ENCODE measurements at regions of chr9 and their contacts with region 1.

Region 1: DNA sequence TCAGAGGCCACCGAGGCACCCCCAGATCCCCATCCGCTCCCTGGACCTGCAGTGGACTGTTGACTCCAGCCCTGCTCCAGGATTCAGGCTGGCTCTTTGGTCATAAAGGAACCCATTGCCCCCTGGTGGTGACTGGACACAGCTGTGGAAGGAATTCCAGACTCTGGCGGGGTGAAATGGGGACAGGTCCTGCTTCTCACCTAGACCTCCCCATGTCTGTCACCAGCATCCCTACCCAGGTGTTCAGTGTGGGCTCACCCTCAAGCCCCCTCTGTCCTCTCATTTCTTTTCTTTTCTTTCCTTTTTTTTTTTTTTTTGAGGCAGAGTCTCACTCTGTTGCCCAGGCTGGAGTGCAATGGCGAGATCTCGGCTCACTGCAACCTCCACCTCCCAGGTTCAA is 25.5 kb upstream of the STXBP1 start:
- DNase-seq: peak; percentile 76
- ATAC-seq: peak; percentile 85
- H3K4me3 ChIP-seq: no peak overlapping the region
- H3K27ac ChIP-seq: no peak overlapping the region
- H3K4me1 ChIP-seq: peaks cover 4% of the 10 kb centered on the region
- H3K27me3 ChIP-seq: no peaks in the 10 kb centered on the region
- CTCF ChIP-seq: peak; percentile 94
- POLR2A ChIP-seq: no peak
- RAD21 ChIP-seq: peak; percentile 94

Region 2: GRCh38 chr9:127450830-127451724 is 135.5 kb before region 1 on chr9 and contains the starts of genes LRSAM1 and RPL12:
- CTCF ChIA-PET with region 1: no interaction called
- POLR2A ChIA-PET with region 1: no interaction called
- dilution Hi-C with region 1: no loop called
- in situ Hi-C with region 1: no loop called
- intact Hi-C with region 1: loop called (anchors 5 kb)
- DNase-seq: peak; percentile 94
- ATAC-seq: peak; percentile 60
- H3K4me3 ChIP-seq: peak within 1 kb of the TSS; percentile 83
- H3K27ac ChIP-seq: peak within 1 kb of the TSS; percentile 91
- H3K4me1 ChIP-seq: peaks cover 13% of the 10 kb centered on the region
- H3K27me3 ChIP-seq: no peaks in the 10 kb centered on the region
- CTCF ChIP-seq: no peak
- POLR2A ChIP-seq: peak; percentile 100
- RAD21 ChIP-seq: no peak
- total RNA-seq, gene LRSAM1: 3.0 and 3.3 TPM in 2 replicates
- total RNA-seq, gene RPL12: 1,864 and 2,290 TPM in 2 replicates

Region 3: GRCh38 chr9:127525401-127526187 is 60.9 kb before region 1 on chr9:
- CTCF ChIA-PET with region 1: interaction called, 11 read pairs
- POLR2A ChIA-PET with region 1: interaction called, 3 read pairs
- dilution Hi-C with region 1: no loop called
- in situ Hi-C with region 1: no loop called
- intact Hi-C with region 1: loop called (anchors 1 kb)
- DNase-seq: peak; percentile 58
- ATAC-seq: peak; percentile 7; the same call in 1 of the 2 replicates
- H3K4me3 ChIP-seq: no peak overlapping the region
- H3K27ac ChIP-seq: peak overlapping the region; percentile 84; the same call in 1 of the 2 replicates
- H3K4me1 ChIP-seq: peaks cover 38% of the 10 kb centered on the region
- H3K27me3 ChIP-seq: no peaks in the 10 kb centered on the region
- CTCF ChIP-seq: peak; percentile 66
- POLR2A ChIP-seq: no peak
- RAD21 ChIP-seq: peak; percentile 69

Region 4: GRCh38 chr9:127715394-127716337 is 129.1 kb after region 1 on chr9 and contains the starts of genes PTRH1 and TTC16:
- CTCF ChIA-PET with region 1: no interaction called
- POLR2A ChIA-PET with region 1: no interaction called
- dilution Hi-C with region 1: no loop called
- in situ Hi-C with region 1: no loop called
- intact Hi-C with region 1: loop called (anchors 1 kb)
- DNase-seq: peak; percentile 93
- ATAC-seq: peak; percentile 98
- H3K4me3 ChIP-seq: peak within 1 kb of the TSS; percentile 80
- H3K27ac ChIP-seq: peak within 1 kb of the TSS; percentile 46
- H3K4me1 ChIP-seq: peaks cover 7% of the 10 kb centered on the region
- H3K27me3 ChIP-seq: no peaks in the 10 kb centered on the region
- CTCF ChIP-seq: no peak
- POLR2A ChIP-seq: peak; percentile 43; the same call in 1 of the 2 replicates
- RAD21 ChIP-seq: no peak
- total RNA-seq, gene PTRH1: 5.4 and 8.3 TPM in 2 replicates
- total RNA-seq, gene TTC16: not detected in 2 replicates

Region 5: DNA sequence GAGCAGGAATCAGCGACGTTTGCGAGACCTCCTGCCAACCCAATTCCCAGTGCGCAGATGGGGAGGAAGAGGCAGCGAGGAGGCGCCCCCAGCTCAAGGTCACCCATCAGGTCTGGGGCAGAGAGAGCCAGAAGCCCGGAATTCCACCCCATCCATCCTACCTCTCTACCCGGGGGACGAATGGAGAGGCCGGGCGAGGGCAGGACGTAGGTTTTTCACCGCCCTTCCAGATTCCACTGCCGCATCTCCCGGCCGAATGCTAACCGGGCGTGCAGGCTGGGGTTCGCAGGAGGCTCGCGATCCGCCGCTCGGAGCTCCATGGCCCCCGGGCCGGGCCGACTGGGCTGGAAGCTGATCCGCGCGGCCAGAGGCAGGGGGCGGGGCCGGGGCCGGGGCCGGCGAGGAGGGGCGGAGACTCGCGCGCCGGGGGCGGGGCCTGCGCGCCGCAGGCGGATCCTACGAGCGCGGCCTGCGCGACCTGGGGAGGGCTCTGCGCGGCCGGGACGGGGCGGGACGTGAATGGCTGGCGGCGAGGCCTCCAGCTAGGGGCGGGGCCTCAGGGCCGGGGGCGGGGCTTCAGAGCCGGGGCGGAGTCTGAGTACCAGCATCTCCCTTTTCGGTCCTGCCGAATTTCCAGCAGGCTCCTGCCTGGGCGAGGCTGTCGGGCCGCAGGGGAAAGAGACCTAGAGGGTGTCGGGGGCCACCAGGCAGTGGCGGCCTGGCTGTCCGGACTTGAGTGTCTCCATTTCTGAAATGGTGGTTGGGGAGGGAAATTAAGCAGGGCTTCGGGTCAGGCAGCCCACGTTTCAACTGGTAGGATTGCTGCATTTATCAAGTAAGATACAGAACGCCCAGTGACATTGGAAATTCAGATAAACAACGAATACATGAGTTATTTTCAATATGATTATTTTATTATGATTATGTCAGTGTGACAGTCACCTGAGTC is 330.4 kb after region 1 on chr9 and contains the start of gene ST6GALNAC4:
- CTCF ChIA-PET with region 1: interaction called, 4 read pairs
- POLR2A ChIA-PET with region 1: no interaction called
- dilution Hi-C with region 1: no loop called
- in situ Hi-C with region 1: loop called (anchors 5 kb)
- intact Hi-C with region 1: loop called (anchors 2 kb)
- DNase-seq: peak; percentile 88
- ATAC-seq: peak; percentile 95
- H3K4me3 ChIP-seq: peak within 1 kb of the TSS; percentile 66
- H3K27ac ChIP-seq: peak within 1 kb of the TSS; percentile 68
- H3K4me1 ChIP-seq: peaks cover 27% of the 10 kb centered on the region
- H3K27me3 ChIP-seq: no peaks in the 10 kb centered on the region
- CTCF ChIP-seq: no peak
- POLR2A ChIP-seq: peak; percentile 41; the same call in 1 of the 2 replicates
- RAD21 ChIP-seq: no peak
- total RNA-seq, gene ST6GALNAC4: 11.9 and 12.5 TPM in 2 replicates

Measured in IMR-90 (cell line).